Left ventricle myocardium inferior (tissue), 1 donor: ENCODE measurements at regions of chr4 and their contacts with region 1.

Region 1: GRCh38 chr4:87465739-87466366 is 43.5 kb downstream of the NUDT9 start:
- DNase-seq: no peak
- H3K4me3 ChIP-seq: no peak overlapping the region
- H3K27ac ChIP-seq: peak overlapping the region; percentile 20
- H3K4me1 ChIP-seq: peaks cover 5% of the 10 kb centered on the region
- H3K27me3 ChIP-seq: no peaks in the 10 kb centered on the region
- CTCF ChIP-seq: peak; percentile 77

Region 2: GRCh38 chr4:87260477-87260876 is 205.4 kb before region 1 on chr4:
- intact Hi-C with region 1: loop called (anchors 10 kb)
- DNase-seq: no peak
- H3K4me3 ChIP-seq: no peak overlapping the region
- H3K27ac ChIP-seq: no peak overlapping the region
- H3K4me1 ChIP-seq: no peaks in the 10 kb centered on the region
- H3K27me3 ChIP-seq: no peaks in the 10 kb centered on the region
- CTCF ChIP-seq: no peak

Region 3: GRCh38 chr4:87375719-87376291 is 90.0 kb before region 1 on chr4:
- intact Hi-C with region 1: loop called (anchors 10 kb)
- DNase-seq: no peak
- H3K4me3 ChIP-seq: no peak overlapping the region
- H3K27ac ChIP-seq: no peak overlapping the region
- H3K4me1 ChIP-seq: peaks cover 10% of the 10 kb centered on the region
- H3K27me3 ChIP-seq: no peaks in the 10 kb centered on the region
- CTCF ChIP-seq: peak; percentile 87

Region 4: DNA sequence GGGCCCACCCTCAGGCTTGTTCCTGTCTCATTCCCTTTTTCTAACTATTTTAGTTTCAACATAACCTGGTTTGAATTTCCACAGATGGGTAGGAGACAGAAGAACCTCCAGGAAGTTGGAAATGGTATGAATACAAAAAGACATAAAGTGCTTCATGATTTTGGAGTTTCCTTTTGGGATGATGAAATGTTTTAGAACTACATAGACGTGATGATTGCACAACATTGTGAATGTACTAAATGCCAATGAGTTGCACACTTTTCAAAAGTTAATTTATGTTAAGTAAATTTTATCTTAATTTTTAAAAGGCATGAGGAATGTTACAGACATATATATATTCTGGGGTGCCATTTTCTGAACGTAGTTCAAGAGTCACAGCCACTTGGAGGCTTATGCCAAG is 292.4 kb after region 1 on chr4:
- intact Hi-C with region 1: no loop called
- DNase-seq: no peak
- H3K4me3 ChIP-seq: no peak overlapping the region
- H3K27ac ChIP-seq: no peak overlapping the region
- H3K4me1 ChIP-seq: no peaks in the 10 kb centered on the region
- H3K27me3 ChIP-seq: no peaks in the 10 kb centered on the region
- CTCF ChIP-seq: no peak